CD8-positive, alpha-beta memory T cell (primary cell): ENCODE measurements at regions of chr22 and their contacts with region 1.

Region 1: DNA sequence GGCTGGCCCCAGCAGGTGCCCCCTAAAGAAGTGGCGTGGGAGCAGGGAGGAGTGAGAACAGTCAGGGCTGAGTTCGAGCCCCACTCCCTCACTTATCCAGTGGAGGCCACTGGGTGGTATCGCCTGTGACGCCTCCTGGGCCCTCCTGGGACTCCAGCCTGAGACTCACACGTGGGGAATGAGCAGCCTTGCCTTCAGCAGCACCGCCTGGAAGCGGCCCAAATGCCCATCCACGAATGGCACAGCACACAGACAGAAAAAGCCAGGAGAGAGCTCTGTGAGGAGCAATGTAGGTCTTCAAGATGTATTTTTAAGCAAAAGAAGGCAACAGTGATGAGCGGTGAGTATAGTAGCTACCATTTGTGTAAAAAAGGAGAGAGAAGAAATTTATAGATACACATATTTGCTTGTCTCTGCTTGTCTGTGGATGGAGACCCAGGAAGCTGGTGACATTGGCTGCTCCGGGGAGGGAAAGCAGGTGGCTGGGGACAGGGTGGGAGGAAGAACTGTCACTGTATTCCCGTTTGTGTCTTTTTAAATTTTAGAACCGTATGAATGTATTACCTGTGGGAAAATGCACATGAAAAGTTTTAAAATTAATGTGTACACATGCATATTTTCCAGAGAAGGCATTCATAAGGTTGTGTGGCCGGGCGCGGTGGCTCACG is 13.2 kb downstream of the KCNJ4 start:
- DNase-seq: no peak
- H3K4me3 ChIP-seq: no peak overlapping the region
- H3K4me3 Mint-ChIP-seq: no peak overlapping the region
- H3K27ac ChIP-seq: no peak overlapping the region
- H3K27ac Mint-ChIP-seq: no peak overlapping the region
- H3K4me1 ChIP-seq: no peaks in the 10 kb centered on the region
- H3K4me1 Mint-ChIP-seq: no peaks in the 10 kb centered on the region
- H3K27me3 ChIP-seq: no peaks in the 10 kb centered on the region
- H3K27me3 Mint-ChIP-seq: peaks cover 21 to 27% of the 10 kb centered on the region in 2 donors

Region 2: GRCh38 chr22:38398609-38399461 is 42.9 kb before region 1 on chr22:
- CTCF ChIA-PET with region 1: no interaction called
- POLR2A ChIA-PET with region 1: interaction called, 10 read pairs
- DNase-seq: peak; percentile 76 to 88 (median 78)
- H3K4me3 ChIP-seq: peak overlapping the region; percentile 40
- H3K4me3 Mint-ChIP-seq: peak overlapping the region; percentile 78 to 93 (median 84)
- H3K27ac ChIP-seq: peak overlapping the region; percentile 20
- H3K27ac Mint-ChIP-seq: peak overlapping the region in 4 of 8 donors; percentile 56 to 72 (median 64)
- H3K4me1 ChIP-seq: no peaks in the 10 kb centered on the region
- H3K4me1 Mint-ChIP-seq: peaks cover 16 to 34% (median 23%) of the 10 kb centered on the region in 3 donors
- H3K27me3 ChIP-seq: no peaks in the 10 kb centered on the region
- H3K27me3 Mint-ChIP-seq: peaks cover 1 to 16% of the 10 kb centered on the region in 2 donors

Region 3: DNA sequence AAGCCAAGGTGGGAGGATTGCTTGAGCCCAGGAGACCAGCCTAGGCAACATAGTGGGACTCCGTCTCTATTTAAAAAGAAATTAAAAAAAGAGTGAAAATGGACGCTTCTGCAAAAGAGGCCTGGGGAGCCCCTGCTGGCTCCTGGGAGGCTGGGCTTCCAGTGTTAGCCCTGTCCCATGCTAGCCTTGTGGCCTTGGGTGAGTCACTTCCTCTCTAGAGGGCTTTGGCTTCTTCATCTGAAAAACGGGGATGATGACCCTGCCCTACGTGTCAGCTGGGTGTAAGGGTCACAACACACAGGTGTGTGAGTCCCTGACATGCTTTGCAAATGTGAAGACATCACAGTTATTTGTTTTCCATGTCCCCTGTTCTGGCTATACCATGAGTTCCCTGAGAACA is 181.6 kb after region 1 on chr22:
- CTCF ChIA-PET with region 1: no interaction called
- POLR2A ChIA-PET with region 1: no interaction called
- DNase-seq: no peak
- H3K4me3 ChIP-seq: no peak overlapping the region
- H3K4me3 Mint-ChIP-seq: no peak overlapping the region
- H3K27ac ChIP-seq: no peak overlapping the region
- H3K27ac Mint-ChIP-seq: no peak overlapping the region
- H3K4me1 ChIP-seq: no peaks in the 10 kb centered on the region
- H3K4me1 Mint-ChIP-seq: no peaks in the 10 kb centered on the region
- H3K27me3 ChIP-seq: no peaks in the 10 kb centered on the region
- H3K27me3 Mint-ChIP-seq: peaks cover 12 to 13% of the 10 kb centered on the region in 2 donors